Dorsolateral prefrontal cortex (tissue), 120 donors: ENCODE measurements at regions of chr1 and their contacts with region 1.

Region 1: GRCh38 chr1:20212685-20213331 is 26.5 kb upstream of the PLA2G2C start:
- DNase-seq: peak; percentile 33 to 73 (median 51)
- H3K4me3 ChIP-seq: peak overlapping the region in 14 of 59 donors; percentile 3 to 40 (median 22)
- H3K27ac ChIP-seq: peak overlapping the region in 2 of 59 donors; percentile 5 to 16
- H3K27me3 ChIP-seq: no peaks in the 10 kb centered on the region
- CTCF ChIP-seq: peak; percentile 62 to 91 (median 77)

Region 2: GRCh38 chr1:20279509-20279908 is 66.7 kb after region 1 on chr1:
- intact Hi-C with region 1: no loop called
- DNase-seq: no peak
- H3K4me3 ChIP-seq: no peak overlapping the region
- H3K27ac ChIP-seq: no peak overlapping the region
- H3K27me3 ChIP-seq: peaks cover 0 to 4% (median 0%) of the 10 kb centered on the region in 45 donors
- CTCF ChIP-seq: no peak

Region 3: DNA sequence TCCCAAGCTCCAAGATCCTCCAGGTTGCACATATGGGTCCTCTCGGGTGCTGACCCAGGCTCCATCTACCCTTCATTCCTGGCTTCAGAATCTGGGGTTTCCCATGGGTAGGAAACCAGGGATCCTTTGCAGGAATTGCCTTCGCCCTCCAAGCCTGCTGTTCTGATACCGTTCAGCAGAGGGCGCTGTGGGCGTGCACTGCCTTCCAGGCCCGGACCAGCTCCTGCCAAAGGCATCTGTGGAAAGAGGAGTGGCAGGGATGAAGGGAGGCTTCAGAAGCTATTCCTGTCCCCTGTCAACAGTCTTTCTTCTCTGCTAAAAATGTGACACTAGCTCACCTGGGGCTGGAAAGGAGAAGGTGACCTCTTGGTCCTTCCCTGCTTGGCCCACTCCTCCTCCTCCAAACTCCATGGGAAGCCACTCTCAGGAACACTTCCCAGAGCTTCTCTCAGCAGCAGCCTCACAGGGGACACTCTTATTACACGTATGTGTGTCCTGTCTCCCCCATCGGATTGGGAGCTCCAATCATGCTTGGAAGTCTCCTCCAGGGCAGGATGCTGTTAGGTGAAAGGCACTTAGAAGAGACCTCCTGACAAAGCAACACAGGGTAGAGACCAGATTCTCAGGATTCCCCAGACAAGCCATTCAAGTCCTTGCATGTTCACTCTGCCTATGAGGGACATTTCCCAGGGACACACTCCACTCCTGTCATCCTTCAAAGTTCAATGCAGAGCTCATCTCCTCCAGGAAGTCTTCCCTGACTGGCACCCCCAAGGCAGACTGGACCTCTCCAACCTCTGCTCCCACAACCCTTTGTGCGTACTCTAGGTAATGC is 149.2 kb after region 1 on chr1:
- intact Hi-C with region 1: loop called (anchors 5 kb)
- DNase-seq: peak; percentile 71 to 90 (median 82)
- H3K4me3 ChIP-seq: no peak overlapping the region
- H3K27ac ChIP-seq: peak overlapping the region in 9 of 59 donors; percentile 2 to 52 (median 31)
- H3K27me3 ChIP-seq: peaks cover 0 to 20% (median 0%) of the 10 kb centered on the region in 45 donors
- CTCF ChIP-seq: peak; percentile 61 to 96 (median 88)

Region 4: GRCh38 chr1:20633190-20634064 is 420.6 kb after region 1 on chr1 and contains the start of gene PINK1:
- intact Hi-C with region 1: loop called in 1 of 2 experiments (anchors 5 kb)
- DNase-seq: peak; percentile 59 to 91 (median 77)
- H3K4me3 ChIP-seq: peak within 1 kb of the TSS; percentile 68 to 100 (median 92)
- H3K27ac ChIP-seq: peak within 1 kb of the TSS; percentile 31 to 99 (median 91)
- H3K27me3 ChIP-seq: no peaks in the 10 kb centered on the region
- CTCF ChIP-seq: peak; percentile 73 to 99 (median 96)
- total RNA-seq, gene PINK1: 159 to 357 (median 261) TPM